ENCODE measurements at regions of chr10 and their contacts with region 1.

Region 1: GRCh38 chr10:95480102-95480900 is 80.9 kb downstream of the SORBS1 start:
- DNase-seq: peak in 1 of 4 donors; percentile 67
- ATAC-seq: peak; percentile 15
- H3K4me3 ChIP-seq: no peak overlapping the region
- H3K27ac ChIP-seq: peak overlapping the region; percentile 67 to 68
- H3K4me1 ChIP-seq: peaks cover 20 to 29% of the 10 kb centered on the region in 2 donors
- H3K27me3 ChIP-seq: no peaks in the 10 kb centered on the region
- CTCF ChIP-seq: no peak

Region 2: GRCh38 chr10:95559471-95559870 is 79.2 kb after region 1 on chr10:
- intact Hi-C with region 1: loop called in 1 of 2 experiments (anchors 10 kb)
- DNase-seq: no peak
- ATAC-seq: no peak
- H3K4me3 ChIP-seq: peak overlapping the region in 1 of 2 donors; percentile 78
- H3K27ac ChIP-seq: peak overlapping the region; percentile 8 to 53
- H3K4me1 ChIP-seq: peaks cover 0 to 26% of the 10 kb centered on the region in 2 donors
- H3K27me3 ChIP-seq: peaks cover 0 to 17% of the 10 kb centered on the region in 2 donors
- CTCF ChIP-seq: no peak

Region 3: DNA sequence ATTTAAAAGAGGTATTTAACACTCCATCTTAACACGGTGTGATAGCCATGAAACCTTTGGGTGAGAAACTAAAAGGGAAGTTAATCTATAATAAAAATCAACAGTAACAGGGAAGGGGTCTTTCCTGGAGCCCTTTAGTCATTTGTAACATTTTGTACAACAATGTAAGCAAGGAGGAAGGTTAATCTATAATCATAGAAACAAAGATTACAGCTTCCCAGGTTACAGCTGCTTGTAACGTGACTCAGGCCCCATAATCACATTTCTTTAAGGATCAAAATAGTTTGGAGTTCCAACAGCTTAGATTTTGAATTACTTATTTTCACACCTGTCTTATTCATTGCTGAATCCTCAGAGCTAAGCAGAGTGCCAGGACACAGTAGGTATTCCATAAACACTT is 409.5 kb after region 1 on chr10:
- intact Hi-C with region 1: no loop called
- DNase-seq: no peak
- ATAC-seq: no peak
- H3K4me3 ChIP-seq: no peak overlapping the region
- H3K27ac ChIP-seq: no peak overlapping the region
- H3K4me1 ChIP-seq: no peaks in the 10 kb centered on the region
- H3K27me3 ChIP-seq: no peaks in the 10 kb centered on the region
- CTCF ChIP-seq: no peak

Measured in left lung (tissue), 14 donors.